Transverse colon (tissue), 4 donors: ENCODE measurements at regions of chr12 and their contacts with region 1.

Region 1: GRCh38 chr12:109393437-109394345 is 46.0 kb downstream of the MYO1H start:
- DNase-seq: peak; percentile 46
- H3K4me3 ChIP-seq: no peak overlapping the region
- H3K27ac ChIP-seq: no peak overlapping the region
- H3K4me1 ChIP-seq: no peaks in the 10 kb centered on the region
- H3K27me3 ChIP-seq: no peaks in the 10 kb centered on the region
- CTCF ChIP-seq: peak; percentile 59 to 90 (median 87)
- EP300 ChIP-seq: no peak
- POLR2A ChIP-seq: no peak

Region 2: DNA sequence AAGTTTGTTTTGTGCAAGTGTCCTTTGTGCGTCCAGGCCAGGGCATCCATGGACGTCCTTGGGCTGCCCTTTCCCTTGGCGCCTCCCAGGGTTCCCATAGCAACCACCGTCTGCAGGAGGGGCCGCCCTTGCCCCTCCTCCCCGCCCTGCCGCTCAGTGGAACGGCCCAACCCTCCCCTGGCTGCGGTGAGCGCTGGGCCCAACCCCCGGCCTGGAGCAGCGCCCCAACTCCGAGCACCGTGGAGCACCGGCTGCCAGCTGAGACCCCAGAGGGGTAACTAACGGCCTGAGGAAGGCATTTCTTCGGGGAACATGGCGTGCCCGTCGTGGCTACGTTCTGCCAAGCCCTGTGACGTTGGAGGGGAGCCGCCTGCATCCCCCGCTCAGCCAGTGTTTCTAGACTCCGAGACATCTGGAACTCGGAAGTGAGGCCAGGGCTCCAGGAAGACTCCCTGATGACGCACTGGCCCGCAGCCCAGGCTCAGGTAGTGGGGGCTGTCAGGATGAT is 282.6 kb before region 1 on chr12:
- in situ Hi-C with region 1: loop called in 2 of 4 experiments (anchors 10 to 25 kb)
- intact Hi-C with region 1: no loop called
- DNase-seq: peak; percentile 93
- H3K4me3 ChIP-seq: peak overlapping the region; percentile 46 to 64 (median 56)
- H3K27ac ChIP-seq: peak overlapping the region; percentile 93 to 98 (median 95)
- H3K4me1 ChIP-seq: peaks cover 11 to 49% (median 48%) of the 10 kb centered on the region in 4 donors
- H3K27me3 ChIP-seq: no peaks in the 10 kb centered on the region
- CTCF ChIP-seq: no peak
- EP300 ChIP-seq: peak; percentile 94
- POLR2A ChIP-seq: peak; percentile 93

Region 3: DNA sequence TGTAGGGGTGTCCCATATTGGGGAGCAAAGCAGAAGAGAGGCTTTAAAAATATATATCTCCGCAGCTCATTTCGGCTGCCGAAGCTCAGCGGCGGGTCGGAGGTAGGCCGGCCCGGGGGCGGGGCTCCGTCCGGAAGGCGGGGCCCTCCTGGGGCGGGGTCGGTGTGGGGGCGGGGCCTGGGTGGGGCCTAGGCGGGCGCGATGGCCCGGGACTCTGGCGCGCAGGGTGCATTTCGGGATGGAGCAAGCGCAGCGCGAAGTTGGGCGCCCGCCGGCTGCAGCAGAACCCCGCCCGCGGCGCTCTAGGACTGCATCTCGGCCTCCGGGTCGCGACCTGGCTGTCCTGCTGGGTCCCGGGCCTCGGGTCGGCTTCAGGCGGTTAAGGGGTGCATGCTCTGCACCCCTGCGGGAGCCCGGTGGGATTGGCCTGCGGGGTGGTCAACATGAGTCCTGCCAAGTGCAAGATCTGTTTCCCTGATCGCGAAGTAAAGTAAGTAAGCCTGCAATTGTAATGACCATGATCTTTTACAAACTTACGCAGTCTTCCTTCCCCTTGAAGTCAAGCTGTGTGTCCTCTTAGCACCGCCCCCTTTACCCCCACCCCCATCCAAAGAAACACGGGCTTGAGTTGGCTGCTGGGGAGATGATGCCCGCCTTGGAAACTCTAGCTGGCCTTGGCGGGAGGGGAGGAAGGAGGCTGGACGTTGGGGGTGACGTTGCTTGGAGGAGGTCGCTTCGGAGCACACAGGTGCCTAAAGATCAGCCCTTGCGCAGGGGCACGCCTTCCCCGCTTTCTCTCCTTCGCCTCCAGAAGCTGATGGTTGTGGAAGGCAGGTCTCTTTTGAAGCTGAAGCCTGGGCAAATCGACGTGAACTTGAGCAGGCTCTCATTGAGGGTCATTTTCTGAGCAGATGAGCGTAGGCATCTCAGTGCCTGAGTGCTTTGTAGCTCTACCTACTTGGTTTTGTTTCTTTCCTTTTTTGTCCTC is 238.9 kb before region 1 on chr12:
- in situ Hi-C with region 1: no loop called
- intact Hi-C with region 1: no loop called
- DNase-seq: peak; percentile 87
- H3K4me3 ChIP-seq: peak overlapping the region; percentile 43 to 74 (median 61)
- H3K27ac ChIP-seq: peak overlapping the region; percentile 78 to 97 (median 94)
- H3K4me1 ChIP-seq: peaks cover 13 to 44% (median 20%) of the 10 kb centered on the region in 4 donors
- H3K27me3 ChIP-seq: no peaks in the 10 kb centered on the region
- CTCF ChIP-seq: no peak
- EP300 ChIP-seq: no peak
- POLR2A ChIP-seq: peak; percentile 67

Region 4: GRCh38 chr12:109336593-109336992 is 57.1 kb before region 1 on chr12:
- in situ Hi-C with region 1: no loop called
- intact Hi-C with region 1: no loop called
- DNase-seq: no peak
- H3K4me3 ChIP-seq: no peak overlapping the region
- H3K27ac ChIP-seq: no peak overlapping the region
- H3K4me1 ChIP-seq: peaks cover 0 to 8% (median 3%) of the 10 kb centered on the region in 4 donors
- H3K27me3 ChIP-seq: no peaks in the 10 kb centered on the region
- CTCF ChIP-seq: no peak
- EP300 ChIP-seq: no peak
- POLR2A ChIP-seq: no peak